ENCODE measurements at regions of chr5 and their contacts with region 1.

Region 1: GRCh38 chr5:36985387-36985786 is 108.8 kb downstream of the NIPBL start:
- DNase-seq: no peak
- ATAC-seq: no peak
- H3K4me3 ChIP-seq: no peak overlapping the region
- H3K4me3 Mint-ChIP-seq: no peak overlapping the region
- H3K27ac ChIP-seq: no peak overlapping the region
- H3K27ac Mint-ChIP-seq: no peak overlapping the region
- H3K4me1 ChIP-seq: no peaks in the 10 kb centered on the region
- H3K4me1 Mint-ChIP-seq: peaks cover 45 to 60% (median 59%) of the 10 kb centered on the region in 3 donors
- H3K27me3 ChIP-seq: no peaks in the 10 kb centered on the region
- H3K27me3 Mint-ChIP-seq: no peaks in the 10 kb centered on the region

Region 2: DNA sequence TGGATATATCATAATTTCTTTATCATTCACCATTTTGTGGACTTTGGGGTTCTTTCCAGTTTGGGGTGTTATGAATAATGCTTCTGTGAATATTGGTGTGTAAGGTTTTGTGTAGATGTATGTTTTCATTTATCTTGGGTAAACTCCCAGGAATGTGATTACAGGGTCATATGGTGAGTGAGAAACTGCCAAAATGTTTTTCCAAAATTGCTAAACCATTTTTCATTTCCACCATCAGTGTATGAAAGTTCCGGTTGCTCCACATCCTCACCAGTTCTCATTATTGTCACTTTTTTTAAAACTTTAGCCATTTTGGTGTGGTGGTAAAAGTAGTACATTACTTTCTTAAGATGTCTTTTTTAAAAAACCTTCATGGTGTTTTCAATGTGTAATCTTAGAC is 44.0 kb after region 1 on chr5:
- CTCF ChIA-PET with region 1: interaction called in 1 of 2 experiments, 4 read pairs
- POLR2A ChIA-PET with region 1: interaction called in 1 of 2 experiments, 12 read pairs
- DNase-seq: no peak
- ATAC-seq: no peak
- H3K4me3 ChIP-seq: no peak overlapping the region
- H3K4me3 Mint-ChIP-seq: no peak overlapping the region
- H3K27ac ChIP-seq: no peak overlapping the region
- H3K27ac Mint-ChIP-seq: no peak overlapping the region
- H3K4me1 ChIP-seq: no peaks in the 10 kb centered on the region
- H3K4me1 Mint-ChIP-seq: peaks cover 2 to 5% (median 4%) of the 10 kb centered on the region in 3 donors
- H3K27me3 ChIP-seq: no peaks in the 10 kb centered on the region
- H3K27me3 Mint-ChIP-seq: no peaks in the 10 kb centered on the region